Mammary epithelial cell (primary cell): ENCODE measurements at regions of chr6 and their contacts with region 1.

Region 1: GRCh38 chr6:137799950-137800568 is 67.0 kb upstream of the TNFAIP3 start:
- DNase-seq: peak; percentile 72
- H3K4me3 ChIP-seq: no peak overlapping the region
- H3K27ac ChIP-seq: no peak overlapping the region
- H3K4me1 ChIP-seq: no peaks in the 10 kb centered on the region
- H3K27me3 ChIP-seq: no peaks in the 10 kb centered on the region
- CTCF ChIP-seq: peak; percentile 71 to 73

Region 2: DNA sequence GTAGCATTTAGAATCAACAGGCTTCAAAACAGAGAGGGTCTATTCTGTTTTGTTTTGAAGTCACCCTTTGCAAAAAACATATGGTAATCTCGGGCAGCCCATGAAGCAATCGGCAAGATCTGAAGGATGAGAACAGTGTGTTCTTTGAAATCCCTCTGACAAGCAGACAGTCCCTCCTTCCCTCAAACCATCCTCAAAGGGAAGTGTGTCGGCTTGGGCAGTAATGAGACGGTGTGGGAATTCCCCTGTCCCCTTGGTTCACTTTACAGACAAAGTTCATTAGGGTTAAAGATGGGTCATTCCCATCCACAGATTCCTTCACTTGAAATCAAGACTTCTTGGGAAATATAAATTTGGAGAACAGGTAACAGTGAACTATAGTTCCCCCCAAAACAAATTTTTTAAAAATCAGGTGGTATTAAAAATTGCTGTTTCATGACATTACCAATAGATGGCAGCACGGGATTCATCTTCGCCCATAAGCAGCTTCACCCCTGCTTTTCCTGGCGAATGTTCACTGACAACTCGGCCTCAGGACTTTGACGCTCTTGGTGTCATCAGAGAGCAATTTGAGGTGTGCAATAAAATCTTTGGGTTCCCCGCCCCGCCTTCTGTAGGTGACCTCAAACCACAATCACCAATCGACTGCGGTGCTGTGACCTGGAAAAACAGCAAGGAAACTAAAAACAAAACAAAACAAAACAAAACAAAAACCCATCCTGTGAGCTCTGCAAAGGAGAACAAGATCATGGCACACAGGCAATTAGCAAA is 92.3 kb before region 1 on chr6:
- CTCF ChIA-PET with region 1: interaction called, 5 read pairs
- dilution Hi-C with region 1: no loop called
- in situ Hi-C with region 1: loop called in 1 of 2 experiments (anchors 10 kb)
- intact Hi-C with region 1: loop called (anchors 1 kb)
- DNase-seq: peak; percentile 92
- H3K4me3 ChIP-seq: no peak overlapping the region
- H3K27ac ChIP-seq: peak overlapping the region; percentile 64
- H3K4me1 ChIP-seq: peaks cover 7% of the 10 kb centered on the region
- H3K27me3 ChIP-seq: no peaks in the 10 kb centered on the region
- CTCF ChIP-seq: peak; percentile 65 to 75

Region 3: GRCh38 chr6:137717074-137718073 is 82.7 kb before region 1 on chr6:
- CTCF ChIA-PET with region 1: no interaction called
- dilution Hi-C with region 1: loop called (anchors 10 kb)
- in situ Hi-C with region 1: loop called in 1 of 2 experiments (anchors 10 kb)
- intact Hi-C with region 1: no loop called
- DNase-seq: peak; percentile 98
- H3K4me3 ChIP-seq: no peak overlapping the region
- H3K27ac ChIP-seq: peak overlapping the region; percentile 88
- H3K4me1 ChIP-seq: peaks cover 18% of the 10 kb centered on the region
- H3K27me3 ChIP-seq: no peaks in the 10 kb centered on the region
- CTCF ChIP-seq: no peak

Region 4: GRCh38 chr6:137728385-137729349 is 71.4 kb before region 1 on chr6:
- CTCF ChIA-PET with region 1: no interaction called
- dilution Hi-C with region 1: loop called (anchors 10 kb)
- in situ Hi-C with region 1: no loop called
- intact Hi-C with region 1: no loop called
- DNase-seq: peak; percentile 99
- H3K4me3 ChIP-seq: no peak overlapping the region
- H3K27ac ChIP-seq: peak overlapping the region; percentile 91
- H3K4me1 ChIP-seq: peaks cover 51% of the 10 kb centered on the region
- H3K27me3 ChIP-seq: no peaks in the 10 kb centered on the region
- CTCF ChIP-seq: no peak

Region 5: DNA sequence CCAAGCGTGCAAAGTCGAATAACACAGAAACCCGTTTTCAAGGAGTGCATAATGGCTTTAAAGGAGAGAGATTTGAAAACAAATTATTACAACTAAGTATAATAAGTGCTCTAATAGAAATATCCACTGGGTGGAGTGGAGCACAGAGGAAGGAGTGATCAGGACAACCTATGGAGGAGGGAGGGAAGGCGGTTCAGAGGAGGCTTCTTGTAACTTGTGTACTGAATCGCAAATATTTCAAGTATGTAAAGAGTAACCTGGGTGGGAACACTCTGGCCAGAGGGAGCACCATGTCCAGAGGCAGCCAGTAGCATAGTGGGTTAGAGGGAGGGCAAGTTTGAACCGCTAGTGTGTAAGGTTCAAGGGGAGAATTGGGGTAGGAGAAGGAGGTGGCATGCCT is 45.4 kb after region 1 on chr6:
- CTCF ChIA-PET with region 1: no interaction called
- dilution Hi-C with region 1: no loop called
- in situ Hi-C with region 1: no loop called
- intact Hi-C with region 1: loop called (anchors 1 kb)
- DNase-seq: no peak
- H3K4me3 ChIP-seq: no peak overlapping the region
- H3K27ac ChIP-seq: no peak overlapping the region
- H3K4me1 ChIP-seq: peaks cover 5% of the 10 kb centered on the region
- H3K27me3 ChIP-seq: no peaks in the 10 kb centered on the region
- CTCF ChIP-seq: peak in 1 of 2 donors; percentile 45

Region 6: DNA sequence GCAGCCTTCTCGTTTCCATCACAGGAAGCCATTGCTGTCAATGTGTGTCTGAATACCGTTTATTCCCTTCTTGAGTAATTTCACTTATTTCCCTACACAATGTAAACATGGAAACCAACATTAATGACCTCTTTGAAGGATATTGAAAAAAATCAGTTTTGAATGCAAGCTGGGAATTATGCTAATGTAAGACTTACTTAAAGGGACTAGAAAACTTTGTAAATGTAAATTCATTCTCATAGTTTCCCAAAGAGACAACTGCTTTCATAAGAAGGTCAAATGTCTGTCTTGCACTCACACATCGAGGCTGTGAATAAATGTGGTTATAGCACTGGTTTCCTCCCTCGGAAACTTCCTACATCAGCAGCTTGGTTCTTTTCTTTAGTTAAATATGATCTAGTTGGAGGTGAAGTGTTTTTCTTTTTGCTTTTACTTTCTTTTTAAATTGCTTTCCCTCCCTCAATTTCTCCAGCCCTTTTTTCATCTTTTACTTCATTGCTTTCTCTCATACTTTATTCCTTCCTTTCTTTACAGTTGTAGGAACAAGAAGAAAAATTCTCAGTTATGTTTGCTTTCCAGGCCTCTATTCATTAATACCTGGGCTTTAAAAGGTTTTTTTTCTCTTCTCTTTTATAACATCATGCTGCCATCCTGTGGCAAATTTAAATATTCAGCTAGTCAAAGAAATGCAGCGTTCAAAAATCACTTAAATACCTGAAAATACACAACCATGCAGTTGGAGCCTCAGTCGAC is 175.3 kb after region 1 on chr6:
- CTCF ChIA-PET with region 1: no interaction called
- dilution Hi-C with region 1: no loop called
- in situ Hi-C with region 1: no loop called
- intact Hi-C with region 1: loop called (anchors 1 kb)
- DNase-seq: no peak
- H3K4me3 ChIP-seq: no peak overlapping the region
- H3K27ac ChIP-seq: no peak overlapping the region
- H3K4me1 ChIP-seq: peaks cover 4% of the 10 kb centered on the region
- H3K27me3 ChIP-seq: no peaks in the 10 kb centered on the region
- CTCF ChIP-seq: peak; percentile 31 to 43